Endothelial cell of umbilical vein (primary cell): ENCODE measurements at regions of chr14 and their contacts with region 1.

Region 1: GRCh38 chr14:104932676-104933631 is 8.3 kb downstream of the PLD4 start:
- DNase-seq: peak; percentile 60
- H3K4me3 ChIP-seq: peak overlapping the region in 2 of 3 experiments; percentile 48 to 49
- H3K27ac ChIP-seq: no peak overlapping the region
- H3K4me1 ChIP-seq: peaks cover 6% of the 10 kb centered on the region
- H3K27me3 ChIP-seq: peaks cover 3 to 11% of the 10 kb centered on the region in 2 experiments
- CTCF ChIP-seq: peak; percentile 42 to 83
- POLR2A ChIP-seq: no peak

Region 2: GRCh38 chr14:104888489-104889374 is 44.2 kb before region 1 on chr14:
- CTCF ChIA-PET with region 1: no interaction called
- POLR2A ChIA-PET with region 1: no interaction called
- dilution Hi-C with region 1: no loop called
- intact Hi-C with region 1: no loop called
- DNase-seq: no peak
- H3K4me3 ChIP-seq: no peak overlapping the region
- H3K27ac ChIP-seq: no peak overlapping the region
- H3K4me1 ChIP-seq: no peaks in the 10 kb centered on the region
- H3K27me3 ChIP-seq: no peaks in the 10 kb centered on the region
- CTCF ChIP-seq: no peak
- POLR2A ChIP-seq: no peak

Region 3: DNA sequence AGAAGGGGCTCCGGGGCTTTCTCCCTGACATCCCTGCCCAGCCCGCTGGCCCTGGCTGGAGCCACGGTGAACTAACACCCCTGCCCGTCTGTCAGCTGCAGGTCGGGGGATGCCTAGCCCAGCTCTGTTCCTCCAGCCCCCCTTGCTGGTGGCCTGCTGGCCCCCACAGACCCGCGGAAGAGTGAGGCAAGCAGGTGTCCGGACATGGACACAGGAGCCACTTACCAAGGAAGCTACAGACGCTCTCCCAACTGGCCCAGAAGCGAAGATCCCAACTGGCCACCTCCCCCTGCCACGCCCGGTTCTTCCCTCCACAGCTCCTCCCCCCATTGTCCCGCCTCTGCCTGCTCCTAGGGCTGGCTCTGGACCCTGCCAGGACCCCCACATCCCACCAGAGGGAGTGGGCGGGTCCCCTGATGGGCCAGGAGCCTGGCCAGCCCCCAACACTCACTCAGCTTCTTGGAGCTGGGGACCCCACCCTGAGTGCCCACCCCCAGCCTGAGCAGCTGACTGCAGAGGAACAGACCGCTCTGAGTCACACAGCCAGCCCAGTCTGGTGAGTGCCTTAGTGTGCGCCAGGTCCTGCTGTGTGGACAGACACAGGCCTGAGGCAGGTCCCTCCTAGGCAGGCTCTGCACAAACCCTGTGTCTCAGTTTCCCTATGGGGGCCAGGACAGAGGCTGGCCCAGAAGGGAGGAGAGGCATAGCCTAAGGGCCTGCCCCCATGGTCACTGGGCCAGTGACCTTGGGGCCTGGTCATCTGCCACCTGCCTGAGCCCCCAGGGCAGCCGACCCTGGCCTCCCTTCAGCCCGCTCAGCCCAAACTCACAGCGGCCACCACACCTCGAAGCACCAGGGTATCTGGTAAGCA is 37.5 kb after region 1 on chr14:
- CTCF ChIA-PET with region 1: interaction called, 39 read pairs
- POLR2A ChIA-PET with region 1: no interaction called
- dilution Hi-C with region 1: no loop called
- intact Hi-C with region 1: loop called (anchors 1 kb)
- DNase-seq: peak; percentile 87
- H3K4me3 ChIP-seq: peak overlapping the region; percentile 24 to 59 (median 41)
- H3K27ac ChIP-seq: peak overlapping the region; percentile 89
- H3K4me1 ChIP-seq: peaks cover 79% of the 10 kb centered on the region
- H3K27me3 ChIP-seq: no peaks in the 10 kb centered on the region
- CTCF ChIP-seq: no peak
- POLR2A ChIP-seq: peak; percentile 74

Region 4: DNA sequence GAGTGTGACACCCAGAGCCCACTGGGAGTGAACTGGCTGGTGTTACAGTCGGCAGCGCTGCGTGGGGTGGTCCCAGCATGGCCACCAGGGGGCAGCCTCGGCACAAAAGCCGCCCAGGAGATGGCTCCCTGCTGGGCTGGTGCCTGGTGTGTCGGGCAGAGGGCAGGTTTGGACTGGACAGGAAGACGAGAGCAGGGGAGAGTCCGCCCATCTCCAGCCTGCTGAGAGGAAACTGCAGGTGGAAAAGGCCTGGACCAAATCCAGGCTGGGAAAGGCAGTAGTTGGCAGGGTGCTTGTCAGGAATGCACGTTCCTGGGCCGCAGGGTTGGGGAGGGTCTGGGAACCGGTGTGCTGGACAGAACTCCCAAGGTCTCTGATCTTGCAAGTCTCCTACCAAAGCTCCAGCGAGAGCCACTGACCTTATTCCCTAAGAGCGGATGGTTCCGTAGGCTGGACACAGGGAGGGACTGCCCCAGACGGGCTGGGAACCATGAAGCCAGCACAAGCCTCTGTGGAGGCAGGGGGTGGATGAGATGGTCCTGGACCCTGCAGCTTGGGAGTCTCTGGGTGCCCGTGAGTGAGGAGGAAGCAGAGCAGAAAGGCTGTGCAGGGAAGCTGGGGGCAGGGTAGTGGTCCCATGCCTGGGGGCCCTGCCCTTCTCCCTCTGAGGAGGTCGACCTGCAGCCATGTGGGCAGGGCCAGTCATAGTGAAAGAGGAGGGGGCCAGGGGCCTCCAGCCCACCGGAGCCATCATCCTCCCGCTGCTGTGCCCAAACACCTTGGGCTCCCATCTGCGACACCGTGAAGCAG is 43.4 kb after region 1 on chr14:
- CTCF ChIA-PET with region 1: interaction called, 39 read pairs
- POLR2A ChIA-PET with region 1: no interaction called
- dilution Hi-C with region 1: no loop called
- intact Hi-C with region 1: no loop called
- DNase-seq: peak; percentile 74
- H3K4me3 ChIP-seq: no peak overlapping the region
- H3K27ac ChIP-seq: no peak overlapping the region
- H3K4me1 ChIP-seq: peaks cover 39% of the 10 kb centered on the region
- H3K27me3 ChIP-seq: no peaks in the 10 kb centered on the region
- CTCF ChIP-seq: peak; percentile 90 to 98
- POLR2A ChIP-seq: no peak

Region 5: GRCh38 chr14:105020815-105021655 is 88.1 kb after region 1 on chr14 and contains the start of gene CDCA4:
- CTCF ChIA-PET with region 1: no interaction called
- POLR2A ChIA-PET with region 1: no interaction called
- dilution Hi-C with region 1: no loop called
- intact Hi-C with region 1: loop called (anchors 1 kb)
- DNase-seq: peak; percentile 96
- H3K4me3 ChIP-seq: peak within 1 kb of the TSS; percentile 68 to 96 (median 72)
- H3K27ac ChIP-seq: peak within 1 kb of the TSS; percentile 80
- H3K4me1 ChIP-seq: peaks cover 58% of the 10 kb centered on the region
- H3K27me3 ChIP-seq: no peaks in the 10 kb centered on the region
- CTCF ChIP-seq: no peak
- POLR2A ChIP-seq: peak; percentile 80
- total RNA-seq, gene CDCA4: 44.5 and 46.3 TPM in 2 replicates

Region 6: GRCh38 chr14:105075379-105076295 is 142.7 kb after region 1 on chr14:
- CTCF ChIA-PET with region 1: no interaction called
- POLR2A ChIA-PET with region 1: no interaction called
- dilution Hi-C with region 1: loop called (anchors 10 kb)
- intact Hi-C with region 1: no loop called
- DNase-seq: no peak
- H3K4me3 ChIP-seq: no peak overlapping the region
- H3K27ac ChIP-seq: no peak overlapping the region
- H3K4me1 ChIP-seq: no peaks in the 10 kb centered on the region
- H3K27me3 ChIP-seq: no peaks in the 10 kb centered on the region
- CTCF ChIP-seq: no peak
- POLR2A ChIP-seq: no peak